ENCODE measurements at regions of chr12 and their contacts with region 1.

Region 1: GRCh38 chr12:26651566-26652188 is 181.3 kb downstream of the ITPR2 start:
- DNase-seq: peak; percentile 88
- ATAC-seq: peak; percentile 73
- H3K4me3 ChIP-seq: no peak overlapping the region
- H3K27ac ChIP-seq: no peak overlapping the region
- H3K4me1 ChIP-seq: peaks cover 9% of the 10 kb centered on the region
- H3K27me3 ChIP-seq: no peaks in the 10 kb centered on the region
- CTCF ChIP-seq: peak; percentile 94
- POLR2A ChIP-seq: no peak
- RAD21 ChIP-seq: peak; percentile 96

Region 2: DNA sequence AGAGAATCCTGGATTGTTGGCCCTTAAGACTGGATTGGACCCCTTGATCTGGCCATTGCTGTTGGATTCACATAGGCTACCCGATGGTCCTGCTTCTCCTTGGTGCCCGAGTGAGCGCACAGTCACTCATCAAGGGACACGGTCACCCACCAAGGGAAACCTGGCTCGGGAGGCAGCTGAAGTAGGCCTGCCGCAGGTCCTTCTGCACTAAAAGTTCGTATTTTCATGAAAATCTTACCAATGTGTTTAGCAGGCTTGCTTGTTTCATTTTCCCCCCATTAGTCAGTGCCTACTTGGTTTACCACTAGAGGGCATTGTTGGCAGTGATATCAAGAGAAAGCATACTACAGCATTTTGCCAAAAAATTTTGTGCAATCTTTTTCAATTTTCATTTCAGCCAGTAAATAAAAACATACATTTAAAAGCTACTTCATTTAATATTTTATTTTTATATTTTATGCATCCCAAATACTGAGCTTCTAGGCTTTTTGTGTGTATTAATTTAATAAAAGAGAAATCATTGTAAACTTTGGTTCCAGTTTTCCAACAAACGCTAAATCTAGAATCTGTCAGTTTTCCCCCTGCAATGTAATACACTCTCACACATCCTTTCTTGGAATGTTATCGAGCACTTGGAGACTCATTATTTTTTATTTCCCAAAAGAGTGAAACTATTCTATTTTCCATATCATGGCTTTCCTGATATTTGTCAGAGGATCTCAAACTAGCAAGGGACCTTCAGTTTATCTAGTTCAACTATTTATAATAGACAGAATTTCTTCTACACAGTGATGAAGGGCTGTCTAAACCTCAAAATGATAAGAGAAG is 1215.3 kb before region 1 on chr12:
- CTCF ChIA-PET with region 1: no interaction called
- POLR2A ChIA-PET with region 1: no interaction called
- dilution Hi-C with region 1: no loop called
- in situ Hi-C with region 1: no loop called
- intact Hi-C with region 1: loop called (anchors 2 kb)
- DNase-seq: peak; percentile 89
- ATAC-seq: peak; percentile 40
- H3K4me3 ChIP-seq: peak overlapping the region; percentile 21; the same call in 1 of the 2 replicates
- H3K27ac ChIP-seq: peak overlapping the region; percentile 75
- H3K4me1 ChIP-seq: peaks cover 17% of the 10 kb centered on the region
- H3K27me3 ChIP-seq: no peaks in the 10 kb centered on the region
- CTCF ChIP-seq: peak; percentile 93
- POLR2A ChIP-seq: peak; percentile 29; the same call in 1 of the 2 replicates
- RAD21 ChIP-seq: peak; percentile 92

Region 3: GRCh38 chr12:26119391-26119981 is 532.2 kb before region 1 on chr12:
- CTCF ChIA-PET with region 1: interaction called, 12 read pairs
- POLR2A ChIA-PET with region 1: no interaction called
- dilution Hi-C with region 1: no loop called
- in situ Hi-C with region 1: loop called (anchors 10 kb)
- intact Hi-C with region 1: loop called (anchors 1 kb)
- DNase-seq: peak; percentile 78
- ATAC-seq: peak; percentile 25; the same call in 1 of the 2 replicates
- H3K4me3 ChIP-seq: no peak overlapping the region
- H3K27ac ChIP-seq: no peak overlapping the region
- H3K4me1 ChIP-seq: no peaks in the 10 kb centered on the region
- H3K27me3 ChIP-seq: peaks cover 3% of the 10 kb centered on the region
- CTCF ChIP-seq: peak; percentile 69
- POLR2A ChIP-seq: no peak
- RAD21 ChIP-seq: peak; percentile 71

Region 4: DNA sequence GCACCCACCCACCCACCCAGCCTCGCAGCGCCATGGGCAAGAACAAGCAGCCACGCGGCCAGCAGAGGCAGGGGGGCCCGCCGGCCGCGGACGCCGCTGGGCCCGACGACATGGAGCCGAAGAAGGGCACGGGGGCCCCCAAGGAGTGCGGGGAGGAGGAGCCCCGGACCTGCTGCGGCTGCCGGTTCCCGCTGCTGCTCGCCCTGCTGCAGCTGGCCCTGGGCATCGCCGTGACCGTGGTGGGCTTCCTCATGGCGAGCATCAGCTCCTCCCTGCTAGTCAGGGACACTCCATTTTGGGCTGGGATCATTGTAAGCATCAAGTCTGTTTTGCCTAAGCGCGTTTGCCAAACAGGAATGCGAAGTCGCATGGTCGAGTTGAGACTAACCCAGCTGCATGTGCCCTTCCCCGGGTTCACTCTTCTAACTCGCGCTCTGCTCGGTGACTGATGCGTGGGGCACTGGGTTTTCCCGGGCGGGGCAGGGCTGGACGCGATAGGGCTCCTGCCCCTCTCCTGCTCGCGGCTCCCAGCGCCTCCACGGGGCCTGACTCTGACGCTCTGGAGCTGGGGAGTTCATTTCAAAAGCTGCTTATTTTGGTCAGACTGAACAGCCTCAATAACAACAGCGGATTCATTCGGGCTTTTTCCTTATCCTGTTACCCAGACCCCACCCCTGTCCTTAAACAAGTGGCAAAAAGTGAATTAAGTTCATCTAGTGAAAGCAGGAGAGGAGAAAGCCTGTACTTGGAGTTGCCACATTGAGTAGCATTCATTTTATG is 455.8 kb before region 1 on chr12:
- CTCF ChIA-PET with region 1: no interaction called
- POLR2A ChIA-PET with region 1: no interaction called
- dilution Hi-C with region 1: no loop called
- in situ Hi-C with region 1: no loop called
- intact Hi-C with region 1: loop called (anchors 5 kb)
- DNase-seq: peak; percentile 31
- ATAC-seq: peak; percentile 81
- H3K4me3 ChIP-seq: peak overlapping the region; percentile 51
- H3K27ac ChIP-seq: peak overlapping the region; percentile 72
- H3K4me1 ChIP-seq: peaks cover 2% of the 10 kb centered on the region
- H3K27me3 ChIP-seq: no peaks in the 10 kb centered on the region
- CTCF ChIP-seq: no peak
- POLR2A ChIP-seq: no peak
- RAD21 ChIP-seq: no peak

Region 5: GRCh38 chr12:26614020-26614616 is 37.6 kb before region 1 on chr12:
- CTCF ChIA-PET with region 1: no interaction called
- POLR2A ChIA-PET with region 1: no interaction called
- dilution Hi-C with region 1: no loop called
- in situ Hi-C with region 1: no loop called
- intact Hi-C with region 1: no loop called
- DNase-seq: peak; percentile 26
- ATAC-seq: no peak
- H3K4me3 ChIP-seq: no peak overlapping the region
- H3K27ac ChIP-seq: no peak overlapping the region
- H3K4me1 ChIP-seq: no peaks in the 10 kb centered on the region
- H3K27me3 ChIP-seq: no peaks in the 10 kb centered on the region
- CTCF ChIP-seq: peak; percentile 57
- POLR2A ChIP-seq: no peak
- RAD21 ChIP-seq: peak; percentile 72

Region 6: GRCh38 chr12:26629864-26630263 is 21.8 kb before region 1 on chr12:
- CTCF ChIA-PET with region 1: interaction called, 8 read pairs
- POLR2A ChIA-PET with region 1: no interaction called
- dilution Hi-C with region 1: no loop called
- in situ Hi-C with region 1: no loop called
- intact Hi-C with region 1: loop called (anchors 1 kb)
- DNase-seq: peak; percentile 70
- ATAC-seq: peak; percentile 71
- H3K4me3 ChIP-seq: no peak overlapping the region
- H3K27ac ChIP-seq: no peak overlapping the region; the same call in 1 of the 2 replicates
- H3K4me1 ChIP-seq: peaks cover 11% of the 10 kb centered on the region
- H3K27me3 ChIP-seq: no peaks in the 10 kb centered on the region
- CTCF ChIP-seq: peak; percentile 75
- POLR2A ChIP-seq: no peak
- RAD21 ChIP-seq: peak; percentile 77